HepG2 (cell line): ENCODE measurements at regions of chr11 and their contacts with region 1.

Region 1: GRCh38 chr11:93741094-93741881 is at the starts of genes C11orf54 and TAF1D:
- DNase-seq: peak; percentile 96
- ATAC-seq: peak; percentile 82
- H3K4me3 ChIP-seq: peak within 1 kb of the TSS; percentile 79 to 90 (median 85)
- H3K27ac ChIP-seq: peak within 1 kb of the TSS; percentile 100
- H3K4me1 ChIP-seq: peaks cover 57% of the 10 kb centered on the region
- H3K27me3 ChIP-seq: peaks cover 0 to 2% of the 10 kb centered on the region in 2 experiments; a peak in 2 of 5 replicates
- CTCF ChIP-seq: peak; percentile 40; the same call in 1 of the 2 replicates
- EP300 ChIP-seq: peak in 1 of 2 experiments; percentile 18; a peak in 1 of 4 replicates
- POLR2A ChIP-seq: peak; percentile 92 to 97
- RAD21 ChIP-seq: no peak
- total RNA-seq, gene C11orf54: 50.1 and 68.3 TPM in 2 replicates
- total RNA-seq, gene TAF1D: 96.9 and 207 TPM in 2 replicates

Region 2: DNA sequence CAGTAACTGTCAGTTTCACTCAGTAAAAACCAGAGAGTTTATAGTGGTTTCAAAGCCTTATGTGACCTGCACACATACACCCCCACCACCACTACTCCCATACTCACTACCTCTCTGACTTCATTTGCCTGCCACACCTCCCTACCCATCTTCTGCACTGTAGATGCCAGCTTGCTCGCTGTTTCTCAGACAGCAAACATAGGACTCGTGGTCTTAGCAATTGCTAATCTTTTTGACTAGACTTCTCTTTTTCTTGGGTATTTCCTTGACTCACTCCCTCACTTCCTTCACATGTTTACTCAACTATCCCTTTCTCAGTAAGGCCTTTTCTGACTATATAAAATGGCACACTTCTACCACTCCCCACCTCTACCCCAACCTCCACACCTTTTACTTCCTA is 52.0 kb before region 1 on chr11:
- CTCF ChIA-PET with region 1: no interaction called
- POLR2A ChIA-PET with region 1: interaction called, 10 read pairs
- in situ Hi-C with region 1: no loop called
- intact Hi-C with region 1: no loop called
- DNase-seq: no peak
- ATAC-seq: no peak
- H3K4me3 ChIP-seq: no peak overlapping the region
- H3K27ac ChIP-seq: no peak overlapping the region
- H3K4me1 ChIP-seq: no peaks in the 10 kb centered on the region
- H3K27me3 ChIP-seq: no peaks in the 10 kb centered on the region
- CTCF ChIP-seq: no peak
- EP300 ChIP-seq: no peak
- POLR2A ChIP-seq: no peak
- RAD21 ChIP-seq: no peak

Region 3: DNA sequence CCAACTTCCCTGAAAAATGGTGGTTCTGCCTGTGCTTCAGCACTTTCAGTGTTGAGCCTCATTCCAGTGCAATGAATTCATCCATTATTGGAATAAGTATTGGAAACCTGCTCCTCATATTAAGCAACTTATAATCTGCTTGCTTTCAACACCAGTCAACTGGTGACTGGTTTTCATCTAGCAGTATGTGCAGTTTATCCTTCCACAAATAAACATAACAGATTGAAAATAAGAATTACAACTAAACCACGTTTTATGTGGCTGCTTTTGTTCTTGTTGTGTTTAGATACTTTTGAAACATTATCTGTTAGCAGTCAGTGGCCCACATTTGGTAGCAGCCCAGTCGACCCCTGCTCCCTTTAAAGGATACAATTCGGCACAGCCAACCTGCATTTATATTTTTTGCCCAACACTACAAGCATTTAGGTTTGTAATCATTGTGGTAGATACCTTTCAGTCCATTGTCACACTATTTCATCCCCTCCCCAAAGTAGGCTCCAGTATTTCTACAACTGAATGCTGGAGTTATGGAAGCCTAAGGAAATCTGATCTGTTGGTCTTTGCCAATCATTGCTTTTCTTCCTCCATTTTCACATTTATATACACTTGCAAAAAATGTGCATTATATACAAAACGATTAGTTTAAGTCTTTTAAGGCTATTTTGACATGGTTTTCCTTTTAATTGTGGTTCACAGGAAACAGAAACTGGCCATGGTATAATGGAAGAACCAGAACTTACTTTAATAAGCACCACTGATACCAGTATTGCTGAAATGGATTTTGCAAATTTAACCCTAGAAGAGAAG is 13.1 kb before region 1 on chr11:
- CTCF ChIA-PET with region 1: no interaction called
- POLR2A ChIA-PET with region 1: interaction called, 59 read pairs
- in situ Hi-C with region 1: no loop called
- intact Hi-C with region 1: no loop called
- DNase-seq: no peak
- ATAC-seq: peak; percentile 28
- H3K4me3 ChIP-seq: no peak overlapping the region
- H3K27ac ChIP-seq: no peak overlapping the region
- H3K4me1 ChIP-seq: peaks cover 13% of the 10 kb centered on the region
- H3K27me3 ChIP-seq: no peaks in the 10 kb centered on the region
- CTCF ChIP-seq: no peak
- EP300 ChIP-seq: no peak
- POLR2A ChIP-seq: peak; percentile 43 to 49; a peak in 2 of 4 replicates
- RAD21 ChIP-seq: no peak

Region 4: DNA sequence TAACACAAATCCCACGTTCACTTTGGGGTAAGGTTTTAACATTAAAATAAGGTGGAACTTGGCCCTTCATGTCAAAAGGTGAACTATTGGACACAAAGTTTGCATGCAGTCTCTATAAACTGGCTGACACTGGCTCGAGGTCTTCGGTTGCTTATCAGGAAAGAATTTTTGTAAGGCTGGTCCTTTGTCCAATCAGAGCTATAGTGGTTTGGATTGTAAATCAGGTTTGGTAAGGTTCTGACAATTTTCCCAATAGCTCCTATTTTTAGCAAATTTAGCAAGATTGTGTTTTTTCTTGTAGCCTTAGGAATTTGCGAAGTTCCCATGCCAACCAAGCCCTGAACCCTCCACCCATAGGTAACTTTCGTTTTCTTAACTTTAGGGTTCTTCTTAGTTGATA is 25.2 kb after region 1 on chr11:
- CTCF ChIA-PET with region 1: no interaction called
- POLR2A ChIA-PET with region 1: interaction called, 29 read pairs
- in situ Hi-C with region 1: no loop called
- intact Hi-C with region 1: no loop called
- DNase-seq: no peak
- ATAC-seq: no peak
- H3K4me3 ChIP-seq: no peak overlapping the region
- H3K27ac ChIP-seq: no peak overlapping the region
- H3K4me1 ChIP-seq: peaks cover 33% of the 10 kb centered on the region
- H3K27me3 ChIP-seq: no peaks in the 10 kb centered on the region
- CTCF ChIP-seq: no peak
- EP300 ChIP-seq: no peak
- POLR2A ChIP-seq: no peak
- RAD21 ChIP-seq: no peak

Region 5: GRCh38 chr11:93773045-93773477 is 31.8 kb after region 1 on chr11:
- CTCF ChIA-PET with region 1: no interaction called
- POLR2A ChIA-PET with region 1: interaction called, 22 read pairs
- in situ Hi-C with region 1: no loop called
- intact Hi-C with region 1: no loop called
- DNase-seq: peak; percentile 69
- ATAC-seq: peak; percentile 95
- H3K4me3 ChIP-seq: no peak overlapping the region; a peak in 1 of 6 replicates
- H3K27ac ChIP-seq: no peak overlapping the region
- H3K4me1 ChIP-seq: peaks cover 30% of the 10 kb centered on the region
- H3K27me3 ChIP-seq: no peaks in the 10 kb centered on the region
- CTCF ChIP-seq: no peak
- EP300 ChIP-seq: peak in 1 of 2 experiments; percentile 11; a peak in 1 of 4 replicates
- POLR2A ChIP-seq: no peak
- RAD21 ChIP-seq: no peak; the same call in 1 of the 2 replicates

Region 6: GRCh38 chr11:93784152-93784934 is 43.1 kb after region 1 on chr11 and contains the start of gene MED17:
- CTCF ChIA-PET with region 1: no interaction called
- POLR2A ChIA-PET with region 1: interaction called, 114 read pairs
- in situ Hi-C with region 1: loop called (anchors 5 kb)
- intact Hi-C with region 1: loop called (anchors 1 kb)
- DNase-seq: peak; percentile 89
- ATAC-seq: peak; percentile 99
- H3K4me3 ChIP-seq: peak within 1 kb of the TSS; percentile 85 to 93 (median 93)
- H3K27ac ChIP-seq: peak within 1 kb of the TSS; percentile 90
- H3K4me1 ChIP-seq: peaks cover 32% of the 10 kb centered on the region
- H3K27me3 ChIP-seq: no peaks in the 10 kb centered on the region; a peak in 1 of 5 replicates
- CTCF ChIP-seq: peak; percentile 59
- EP300 ChIP-seq: no peak
- POLR2A ChIP-seq: peak; percentile 82 to 95
- RAD21 ChIP-seq: peak; percentile 45; the same call in 1 of the 2 replicates
- total RNA-seq, gene MED17: 31.3 and 37.0 TPM in 2 replicates

Region 7: GRCh38 chr11:93796441-93797231 is 55.3 kb after region 1 on chr11:
- CTCF ChIA-PET with region 1: no interaction called
- POLR2A ChIA-PET with region 1: interaction called, 13 read pairs
- in situ Hi-C with region 1: no loop called
- intact Hi-C with region 1: no loop called
- DNase-seq: no peak
- ATAC-seq: no peak
- H3K4me3 ChIP-seq: no peak overlapping the region
- H3K27ac ChIP-seq: no peak overlapping the region
- H3K4me1 ChIP-seq: no peaks in the 10 kb centered on the region
- H3K27me3 ChIP-seq: no peaks in the 10 kb centered on the region
- CTCF ChIP-seq: no peak
- EP300 ChIP-seq: no peak
- POLR2A ChIP-seq: no peak
- RAD21 ChIP-seq: no peak